Dendritic cell treated with granulocyte-macrophage colony-stimulating factor and Interleukin-4, amounts not matched to agents 40 ng/mL and 50 ng/mL, for 4 days (primary cell): ENCODE measurements at regions of chr16 and their contacts with region 1.

Region 1: GRCh38 chr16:70267516-70267915 is 15.8 kb upstream of the EXOSC6 start:
- H3K4me3 Mint-ChIP-seq: no peak overlapping the region
- H3K27ac Mint-ChIP-seq: no peak overlapping the region
- H3K4me1 Mint-ChIP-seq: no peaks in the 10 kb centered on the region
- H3K27me3 Mint-ChIP-seq: no peaks in the 10 kb centered on the region

Region 2: DNA sequence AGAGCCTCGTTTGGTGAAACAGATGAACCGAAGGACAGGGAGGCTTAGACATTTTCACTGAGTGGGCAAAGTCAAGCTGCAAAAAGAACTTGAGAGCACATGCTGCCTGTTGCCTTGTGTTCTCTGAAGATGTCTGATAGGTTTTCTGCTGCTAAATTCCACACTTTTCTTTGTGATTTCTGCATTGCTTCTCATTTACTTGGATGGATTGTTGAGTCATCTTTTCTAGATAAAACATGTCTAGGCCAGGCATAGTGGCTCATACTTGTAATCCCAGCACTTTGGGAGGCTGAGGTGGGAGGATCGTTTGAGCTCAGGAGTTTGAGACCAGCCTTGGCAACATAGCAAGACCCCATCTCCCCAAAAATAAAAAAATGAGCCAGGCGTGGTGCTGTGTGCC is 396.8 kb before region 1 on chr16:
- intact Hi-C with region 1: no loop called
- H3K4me3 Mint-ChIP-seq: no peak overlapping the region
- H3K27ac Mint-ChIP-seq: no peak overlapping the region
- H3K4me1 Mint-ChIP-seq: peaks cover 8% of the 10 kb centered on the region
- H3K27me3 Mint-ChIP-seq: no peaks in the 10 kb centered on the region

Region 3: GRCh38 chr16:70162041-70162451 is 105.5 kb before region 1 on chr16:
- intact Hi-C with region 1: loop called (anchors 10 kb)
- H3K4me3 Mint-ChIP-seq: no peak overlapping the region
- H3K27ac Mint-ChIP-seq: no peak overlapping the region
- H3K4me1 Mint-ChIP-seq: peaks cover 5% of the 10 kb centered on the region
- H3K27me3 Mint-ChIP-seq: peaks cover 3% of the 10 kb centered on the region